Heart right ventricle (tissue), 16 donors: ENCODE measurements at regions of chr13 and their contacts with region 1.

Region 1: GRCh38 chr13:100594731-100595130 is 6.1 kb upstream of the GGACT start:
- DNase-seq: no peak
- ATAC-seq: no peak
- H3K4me3 ChIP-seq: no peak overlapping the region
- H3K27ac ChIP-seq: no peak overlapping the region
- H3K4me1 ChIP-seq: no peaks in the 10 kb centered on the region
- H3K27me3 ChIP-seq: no peaks in the 10 kb centered on the region
- CTCF ChIP-seq: peak in 1 of 9 donors; percentile 9

Region 2: DNA sequence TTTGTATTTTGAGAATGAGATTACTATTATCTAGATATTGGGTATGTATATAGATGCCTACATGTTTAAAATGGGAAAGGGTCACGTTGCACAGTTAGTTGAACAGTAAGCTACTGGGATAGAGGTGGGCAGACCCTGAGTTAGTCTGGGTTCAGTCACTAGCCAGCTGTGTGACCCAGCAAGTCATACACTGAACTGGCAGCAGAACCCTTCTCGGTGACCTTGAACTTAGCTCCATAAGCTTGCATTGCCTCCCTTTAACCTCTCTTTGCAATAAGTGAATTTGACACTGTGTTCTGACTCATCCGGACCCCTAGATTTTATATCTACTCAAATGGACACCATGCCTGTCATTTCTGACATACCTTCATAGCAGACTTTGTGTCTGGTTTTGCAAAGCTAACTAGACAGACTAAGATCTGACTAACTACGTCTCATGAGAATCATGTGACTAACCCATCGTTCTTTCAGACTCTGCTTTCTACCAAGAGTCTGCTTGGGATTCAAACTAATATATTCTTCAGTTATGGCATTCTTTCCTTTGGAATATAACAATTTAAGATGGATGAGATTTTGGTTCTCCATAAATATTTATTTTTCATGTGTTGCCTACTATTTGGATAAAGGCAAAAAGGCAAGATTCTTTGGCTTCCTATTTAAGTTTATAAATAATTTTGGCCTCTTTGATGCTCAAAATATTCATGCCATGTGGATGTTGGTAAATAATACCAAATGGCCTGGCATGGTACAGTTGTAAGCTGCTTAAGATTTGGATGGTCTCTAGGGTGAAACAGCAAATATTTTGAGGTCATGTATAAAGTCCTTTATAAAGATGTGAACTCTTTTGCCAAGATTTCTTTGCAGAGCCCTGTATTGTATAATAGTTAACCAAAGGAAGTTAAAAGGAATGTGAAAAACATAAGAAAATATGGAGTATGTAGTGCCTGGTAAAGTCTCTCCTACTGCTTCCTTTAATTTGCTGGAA is 1017.1 kb after region 1 on chr13:
- intact Hi-C with region 1: loop called in 1 of 10 experiments (anchors 5 kb)
- DNase-seq: no peak
- ATAC-seq: no peak
- H3K4me3 ChIP-seq: no peak overlapping the region
- H3K27ac ChIP-seq: no peak overlapping the region
- H3K4me1 ChIP-seq: no peaks in the 10 kb centered on the region
- H3K27me3 ChIP-seq: no peaks in the 10 kb centered on the region
- CTCF ChIP-seq: no peak